ENCODE measurements at regions of chr5 and their contacts with region 1.

Region 1: GRCh38 chr5:149268928-149269557 is 2.6 kb upstream of the AFAP1L1 start:
- DNase-seq: no peak
- ATAC-seq: peak; percentile 30
- H3K4me3 Mint-ChIP-seq: peak overlapping the region; percentile 4
- H3K27ac Mint-ChIP-seq: peak overlapping the region; percentile 32
- H3K4me1 Mint-ChIP-seq: peaks cover 15% of the 10 kb centered on the region
- H3K27me3 Mint-ChIP-seq: peaks cover 51% of the 10 kb centered on the region
- CTCF ChIP-seq: peak; percentile 69

Region 2: DNA sequence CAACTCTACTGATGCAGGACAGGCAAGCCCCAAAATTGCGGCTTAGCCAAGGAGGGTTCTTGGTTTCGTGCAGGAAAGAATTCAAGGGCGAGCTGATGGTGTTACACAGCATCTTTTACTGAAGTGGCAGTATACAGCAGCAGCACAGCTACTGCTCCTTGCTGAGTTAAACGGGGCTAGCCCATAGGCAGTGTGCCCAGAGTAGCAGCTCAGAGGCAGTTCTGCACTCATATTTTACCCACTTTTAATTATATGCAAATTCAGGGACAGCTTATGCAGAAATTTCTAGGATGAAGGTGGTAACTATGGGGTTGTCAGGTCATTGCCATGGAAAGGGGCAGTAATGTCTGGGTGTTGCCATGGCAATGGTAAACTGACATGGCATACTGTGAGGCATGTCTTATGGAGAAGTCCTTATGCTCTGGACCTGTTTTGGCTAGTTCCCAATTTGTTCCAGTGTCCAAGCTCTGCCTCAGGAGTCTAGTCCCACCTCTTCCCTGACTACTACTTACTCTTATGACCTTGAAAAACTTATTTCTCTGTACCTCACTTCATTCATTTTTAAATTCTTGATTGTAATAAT is 935.7 kb before region 1 on chr5:
- CTCF ChIA-PET with region 1: no interaction called
- POLR2A ChIA-PET with region 1: no interaction called
- intact Hi-C with region 1: no loop called
- DNase-seq: no peak
- ATAC-seq: no peak
- H3K4me3 Mint-ChIP-seq: no peak overlapping the region
- H3K27ac Mint-ChIP-seq: no peak overlapping the region
- H3K4me1 Mint-ChIP-seq: peaks cover 2% of the 10 kb centered on the region
- H3K27me3 Mint-ChIP-seq: peaks cover 4% of the 10 kb centered on the region
- CTCF ChIP-seq: no peak

Region 3: DNA sequence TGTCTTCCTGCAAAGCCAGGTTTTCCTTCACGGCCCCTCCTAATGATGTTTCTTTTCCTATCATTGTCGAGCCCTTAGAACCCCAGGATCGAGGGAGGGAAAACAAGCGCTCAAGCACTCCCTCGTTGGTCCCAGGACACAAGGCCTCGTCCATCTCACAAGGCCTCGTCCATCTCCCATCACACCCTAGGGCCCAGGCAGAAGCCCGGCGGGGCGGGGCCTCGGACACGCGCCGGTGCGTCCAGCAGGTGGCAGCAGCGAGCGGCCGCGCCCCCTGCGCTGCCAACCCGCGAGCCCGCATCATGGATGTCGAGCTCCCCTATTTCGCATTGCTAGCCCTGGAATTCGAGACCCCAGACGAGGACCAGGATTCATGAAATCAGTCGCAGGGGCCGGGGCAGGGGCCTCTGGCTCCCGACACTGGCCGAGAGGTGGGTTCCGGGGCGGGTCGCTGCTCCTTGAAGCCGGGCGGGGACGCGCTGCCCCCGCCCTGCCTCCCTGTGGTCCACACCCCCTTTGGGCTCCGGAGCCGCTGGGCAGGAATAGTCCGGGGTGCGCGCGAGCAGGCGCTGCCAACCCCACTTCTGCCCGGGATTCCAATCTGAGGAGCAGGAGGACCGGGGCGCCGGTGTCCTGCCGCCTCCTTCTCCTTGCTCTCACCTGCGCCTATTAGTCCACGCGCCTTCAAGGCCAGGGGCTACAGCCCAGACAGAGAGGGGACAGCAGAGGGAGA is 127.7 kb before region 1 on chr5 and contains the start of gene ABLIM3:
- CTCF ChIA-PET with region 1: no interaction called
- POLR2A ChIA-PET with region 1: no interaction called
- intact Hi-C with region 1: loop called (anchors 5 kb)
- DNase-seq: peak; percentile 65
- ATAC-seq: peak; percentile 80
- H3K4me3 Mint-ChIP-seq: peak within 1 kb of the TSS; percentile 28
- H3K27ac Mint-ChIP-seq: no peak within 1 kb of the TSS
- H3K4me1 Mint-ChIP-seq: peaks cover 4% of the 10 kb centered on the region
- H3K27me3 Mint-ChIP-seq: peaks cover 39% of the 10 kb centered on the region
- CTCF ChIP-seq: no peak
- total RNA-seq, gene ABLIM3: not detected in 2 replicates

Region 4: GRCh38 chr5:149254506-149254905 is 14.5 kb before region 1 on chr5:
- CTCF ChIA-PET with region 1: no interaction called
- POLR2A ChIA-PET with region 1: no interaction called
- intact Hi-C with region 1: no loop called
- DNase-seq: no peak
- ATAC-seq: no peak
- H3K4me3 Mint-ChIP-seq: no peak overlapping the region
- H3K27ac Mint-ChIP-seq: no peak overlapping the region
- H3K4me1 Mint-ChIP-seq: no peaks in the 10 kb centered on the region
- H3K27me3 Mint-ChIP-seq: peaks cover 17% of the 10 kb centered on the region
- CTCF ChIP-seq: no peak

Measured in activated B cell treated with CpG ODN at 0.5 μM for 24 hours (primary cell).